ENCODE measurements at regions of chr18 and their contacts with region 1.

Region 1: DNA sequence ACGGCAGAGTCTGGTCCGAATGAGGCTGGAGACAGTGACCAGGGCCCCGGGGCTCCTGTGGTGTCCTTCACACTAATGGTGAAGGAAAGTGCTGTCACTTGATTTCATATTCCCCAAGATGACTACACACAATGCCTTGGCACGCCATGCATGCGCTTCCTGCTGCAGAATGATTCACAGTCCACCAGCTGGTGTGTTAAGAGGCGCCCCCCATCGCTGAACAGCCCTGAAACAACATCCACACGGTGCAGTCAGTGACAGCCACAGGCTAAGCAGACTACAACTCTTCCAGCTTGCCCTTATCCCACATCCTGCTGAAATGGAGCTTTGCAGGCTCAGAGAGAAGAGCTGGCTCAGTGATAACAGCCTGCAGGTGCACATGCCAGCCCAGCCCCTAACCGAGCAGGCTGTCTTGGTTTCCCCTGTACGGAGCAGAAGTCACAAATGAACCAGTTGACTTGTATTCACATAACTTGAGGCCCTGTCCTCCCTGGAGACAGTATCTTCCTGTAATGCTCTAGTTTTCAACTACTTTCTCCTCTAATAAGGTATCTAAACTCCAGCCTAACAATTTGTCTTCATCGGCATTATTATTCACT is 24.3 kb upstream of the CDH20 start:
- DNase-seq: peak; percentile 47 to 94 (median 62)

Region 2: DNA sequence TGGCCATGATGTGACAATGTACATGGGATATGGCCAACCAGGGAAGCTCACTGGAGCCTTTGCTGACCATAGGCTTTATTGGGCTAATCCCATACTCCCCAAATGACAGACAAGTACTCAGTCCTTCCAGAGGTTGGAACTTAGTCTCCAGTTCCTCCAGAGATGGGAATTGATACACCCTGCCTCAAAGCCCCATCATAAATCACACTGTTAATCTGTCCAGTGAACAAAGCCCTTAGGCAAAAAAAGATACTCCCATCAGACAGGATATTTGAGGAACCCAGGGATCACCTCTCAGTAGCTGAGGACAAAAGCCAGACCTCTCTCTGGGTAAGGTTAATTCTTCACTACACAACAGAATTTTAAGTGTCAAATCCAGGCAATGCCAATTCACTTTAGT is 223.1 kb before region 1 on chr18:
- intact Hi-C with region 1: loop called (anchors 10 kb)
- DNase-seq: no peak

Region 3: DNA sequence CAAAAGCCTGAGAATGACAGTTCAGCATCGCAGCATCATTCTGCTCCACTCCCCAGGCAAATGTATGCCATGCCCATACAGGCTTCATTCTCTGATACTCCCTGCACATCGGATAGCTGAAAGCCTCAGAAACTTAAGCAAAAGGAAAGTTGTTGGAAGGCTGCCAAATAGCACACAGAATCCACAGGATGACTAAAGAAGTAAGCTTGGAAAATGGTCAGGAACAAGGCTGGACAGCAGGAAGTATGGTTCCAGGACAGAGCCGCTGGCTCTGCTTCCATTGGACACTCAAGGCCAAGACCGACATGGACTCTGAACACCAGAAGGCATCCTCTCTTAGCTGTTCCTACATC is 280.8 kb after region 1 on chr18:
- intact Hi-C with region 1: no loop called
- DNase-seq: no peak

Measured in posterior cingulate gyrus (tissue), 11 donors.